Activated naive CD4-positive, alpha-beta T cell treated with anti-CD3 and anti-CD28 coated beads for 36 hours (primary cell): ENCODE measurements at regions of chr6 and their contacts with region 1.

Region 1: GRCh38 chr6:154675602-154676088 is 57.6 kb upstream of the SCAF8 start:
- DNase-seq: peak; percentile 96
- H3K4me3 Mint-ChIP-seq: no peak overlapping the region
- H3K27ac Mint-ChIP-seq: no peak overlapping the region
- H3K4me1 Mint-ChIP-seq: no peaks in the 10 kb centered on the region
- H3K27me3 Mint-ChIP-seq: no peaks in the 10 kb centered on the region

Region 2: DNA sequence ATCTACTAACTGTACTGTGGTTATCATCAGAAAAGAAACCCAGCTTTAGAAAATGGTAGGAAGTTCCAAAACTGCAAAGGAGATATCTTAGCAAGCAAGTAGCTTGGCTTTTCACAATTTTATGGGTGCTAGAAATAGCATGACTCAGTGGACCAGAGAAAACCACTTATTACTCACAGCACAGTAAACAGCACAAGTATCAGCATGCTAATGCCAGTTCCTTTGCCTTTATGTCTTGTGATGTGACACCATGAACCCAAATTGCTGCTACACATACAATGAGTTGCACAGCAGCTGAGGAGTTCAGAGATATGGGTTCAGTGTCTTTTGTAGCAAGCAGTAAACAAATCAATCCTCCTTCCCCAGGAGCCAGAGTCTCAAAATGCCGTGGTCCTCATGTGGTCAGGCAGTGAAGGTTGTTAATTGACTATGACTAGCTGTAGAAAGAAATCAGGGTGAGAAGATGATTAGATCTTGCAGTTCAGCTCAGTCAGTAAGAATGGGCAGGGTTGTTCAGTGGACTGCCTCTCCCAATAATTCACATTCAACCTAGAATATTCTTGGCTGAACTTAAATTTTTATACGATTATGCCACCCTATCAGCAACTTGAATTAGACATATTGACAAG is 563.4 kb before region 1 on chr6:
- CTCF ChIA-PET with region 1: no interaction called
- intact Hi-C with region 1: no loop called
- DNase-seq: no peak
- H3K4me3 Mint-ChIP-seq: no peak overlapping the region
- H3K27ac Mint-ChIP-seq: no peak overlapping the region
- H3K4me1 Mint-ChIP-seq: no peaks in the 10 kb centered on the region
- H3K27me3 Mint-ChIP-seq: no peaks in the 10 kb centered on the region

Region 3: DNA sequence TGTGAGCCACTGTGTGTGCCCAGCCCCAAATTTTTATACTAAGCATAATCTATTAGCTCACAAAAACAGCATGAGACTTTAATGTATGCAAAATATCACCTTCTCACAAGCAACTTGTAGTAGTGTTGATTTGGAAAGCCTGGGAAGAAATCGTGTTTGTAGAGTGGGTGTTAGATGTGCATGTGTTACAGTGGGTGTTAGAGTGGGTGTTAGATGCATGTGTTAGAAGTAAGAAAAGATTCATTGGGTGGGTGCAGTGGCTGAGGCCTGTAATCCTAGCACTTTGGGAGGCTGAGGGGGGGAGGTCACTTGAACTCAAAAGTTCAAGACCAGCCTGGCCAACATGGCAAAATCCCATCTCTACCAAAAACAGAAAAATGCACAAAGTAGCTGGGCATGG is 51.2 kb after region 1 on chr6:
- CTCF ChIA-PET with region 1: interaction called, 15 read pairs
- intact Hi-C with region 1: no loop called
- DNase-seq: no peak
- H3K4me3 Mint-ChIP-seq: no peak overlapping the region
- H3K27ac Mint-ChIP-seq: no peak overlapping the region
- H3K4me1 Mint-ChIP-seq: peaks cover 3% of the 10 kb centered on the region
- H3K27me3 Mint-ChIP-seq: peaks cover 9% of the 10 kb centered on the region

Region 4: GRCh38 chr6:154773610-154774089 is 98.0 kb after region 1 on chr6:
- CTCF ChIA-PET with region 1: interaction called, 6 read pairs
- intact Hi-C with region 1: loop called (anchors 1 kb)
- DNase-seq: peak; percentile 19
- H3K4me3 Mint-ChIP-seq: no peak overlapping the region
- H3K27ac Mint-ChIP-seq: peak overlapping the region; percentile 70
- H3K4me1 Mint-ChIP-seq: peaks cover 43% of the 10 kb centered on the region
- H3K27me3 Mint-ChIP-seq: no peaks in the 10 kb centered on the region

Region 5: DNA sequence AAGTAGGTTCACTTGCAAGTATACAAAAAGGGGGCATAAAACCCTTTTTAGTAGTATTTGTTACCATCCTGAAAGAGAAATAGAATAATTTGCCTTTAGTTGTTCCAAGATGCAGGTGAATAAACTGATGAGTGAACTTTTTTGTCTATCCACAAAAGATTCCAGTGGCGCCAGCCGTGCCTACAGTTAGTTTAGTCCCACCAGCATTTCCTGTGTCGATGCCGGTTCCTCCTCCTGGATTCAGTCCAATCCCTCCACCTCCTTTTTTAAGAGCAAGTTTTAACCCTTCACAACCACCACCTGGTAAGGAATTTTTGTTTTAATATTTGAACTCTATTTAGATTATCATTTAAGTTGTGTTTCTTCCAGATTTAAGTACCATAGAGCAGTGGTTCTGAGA is 148.4 kb after region 1 on chr6:
- CTCF ChIA-PET with region 1: interaction called, 4 read pairs
- intact Hi-C with region 1: loop called (anchors 5 kb)
- DNase-seq: no peak
- H3K4me3 Mint-ChIP-seq: no peak overlapping the region
- H3K27ac Mint-ChIP-seq: no peak overlapping the region
- H3K4me1 Mint-ChIP-seq: peaks cover 9% of the 10 kb centered on the region
- H3K27me3 Mint-ChIP-seq: no peaks in the 10 kb centered on the region

Region 6: GRCh38 chr6:154876486-154877280 is 201.0 kb after region 1 on chr6:
- CTCF ChIA-PET with region 1: interaction called, 10 read pairs
- intact Hi-C with region 1: no loop called
- DNase-seq: no peak
- H3K4me3 Mint-ChIP-seq: no peak overlapping the region
- H3K27ac Mint-ChIP-seq: no peak overlapping the region
- H3K4me1 Mint-ChIP-seq: peaks cover 6% of the 10 kb centered on the region
- H3K27me3 Mint-ChIP-seq: no peaks in the 10 kb centered on the region

Region 7: DNA sequence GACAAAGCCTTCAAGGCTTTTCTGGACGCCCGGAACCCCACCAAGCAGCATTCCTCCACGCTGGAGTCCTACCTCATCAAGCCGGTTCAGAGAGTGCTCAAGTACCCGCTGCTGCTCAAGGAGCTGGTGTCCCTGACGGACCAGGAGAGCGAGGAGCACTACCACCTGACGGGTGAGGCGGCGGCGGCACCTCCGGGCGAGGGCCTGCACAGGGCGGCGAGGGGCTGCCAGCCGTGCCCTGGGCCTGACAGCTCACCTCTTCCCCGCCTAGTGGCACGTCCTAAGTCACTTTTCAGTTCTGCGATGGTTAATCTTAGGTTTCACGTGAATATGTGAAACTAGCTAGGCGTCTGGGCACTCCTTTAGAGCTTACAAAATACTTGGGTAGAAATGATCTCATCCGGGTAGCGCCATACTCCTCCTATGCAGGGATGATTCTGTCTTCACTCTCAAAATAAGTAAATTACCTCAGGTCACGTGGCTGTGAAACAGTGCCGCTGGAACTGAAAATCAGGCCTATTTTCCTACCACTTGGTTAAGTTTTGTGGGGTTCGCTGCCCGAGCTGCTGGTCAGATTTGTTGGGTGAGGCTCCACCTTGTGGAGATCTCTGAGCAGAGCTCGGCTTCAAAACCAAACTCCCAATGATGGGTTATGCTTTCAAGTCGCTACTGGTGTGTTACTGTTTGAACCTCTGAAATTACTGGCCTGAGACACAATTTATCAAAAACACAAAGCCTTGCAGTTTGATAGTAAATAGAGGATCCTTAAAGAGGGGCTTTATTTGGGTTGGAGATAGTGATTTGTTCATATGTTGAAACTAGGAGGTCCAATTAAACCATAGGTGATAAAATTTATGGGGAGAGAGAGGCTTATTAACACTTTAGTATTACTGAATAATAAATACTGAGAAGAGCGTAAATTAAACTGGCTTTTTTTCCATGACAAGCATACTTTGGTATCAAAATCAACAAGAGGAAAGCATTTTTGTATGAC is 572.7 kb after region 1 on chr6:
- CTCF ChIA-PET with region 1: no interaction called
- intact Hi-C with region 1: loop called (anchors 5 kb)
- DNase-seq: peak; percentile 46
- H3K4me3 Mint-ChIP-seq: no peak overlapping the region
- H3K27ac Mint-ChIP-seq: no peak overlapping the region
- H3K4me1 Mint-ChIP-seq: no peaks in the 10 kb centered on the region
- H3K27me3 Mint-ChIP-seq: no peaks in the 10 kb centered on the region

Region 8: GRCh38 chr6:155351273-155352129 is 675.9 kb after region 1 on chr6:
- CTCF ChIA-PET with region 1: no interaction called
- intact Hi-C with region 1: no loop called
- DNase-seq: no peak
- H3K4me3 Mint-ChIP-seq: no peak overlapping the region
- H3K27ac Mint-ChIP-seq: no peak overlapping the region
- H3K4me1 Mint-ChIP-seq: peaks cover 8% of the 10 kb centered on the region
- H3K27me3 Mint-ChIP-seq: peaks cover 2% of the 10 kb centered on the region

Region 9: DNA sequence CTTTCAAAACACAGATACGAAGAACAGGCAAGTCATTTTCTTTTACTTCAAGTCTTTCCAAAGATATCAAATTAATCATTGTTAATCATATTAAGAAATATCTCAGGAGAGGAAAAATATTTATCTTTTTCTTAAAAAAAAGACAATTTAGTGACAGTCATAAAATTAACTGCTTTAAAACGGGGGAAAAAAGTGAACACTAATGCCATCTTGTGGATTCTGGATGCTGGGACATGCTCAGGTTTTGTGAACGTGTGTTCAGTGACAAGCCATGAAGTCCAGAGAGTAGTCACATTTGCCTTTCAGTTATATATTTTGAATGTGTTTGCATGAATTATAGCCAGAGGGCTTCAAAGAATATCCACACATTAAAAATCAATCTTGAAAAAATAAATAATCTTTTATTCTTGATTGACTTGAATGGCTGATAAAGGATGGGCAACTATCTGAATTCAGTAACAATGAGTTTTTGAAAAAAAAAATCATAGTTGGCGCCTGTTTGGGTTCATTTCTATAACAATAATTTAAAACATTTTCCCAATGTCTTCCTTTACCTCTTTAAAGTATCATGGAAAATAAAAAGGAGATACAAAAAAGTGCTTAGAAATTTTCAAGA is 854.7 kb after region 1 on chr6:
- CTCF ChIA-PET with region 1: no interaction called
- intact Hi-C with region 1: loop called (anchors 1 kb)
- DNase-seq: peak; percentile 47
- H3K4me3 Mint-ChIP-seq: no peak overlapping the region
- H3K27ac Mint-ChIP-seq: no peak overlapping the region
- H3K4me1 Mint-ChIP-seq: peaks cover 22% of the 10 kb centered on the region
- H3K27me3 Mint-ChIP-seq: no peaks in the 10 kb centered on the region